Mammary epithelial cell (primary cell): ENCODE measurements at regions of chr1 and their contacts with region 1.

Region 1: DNA sequence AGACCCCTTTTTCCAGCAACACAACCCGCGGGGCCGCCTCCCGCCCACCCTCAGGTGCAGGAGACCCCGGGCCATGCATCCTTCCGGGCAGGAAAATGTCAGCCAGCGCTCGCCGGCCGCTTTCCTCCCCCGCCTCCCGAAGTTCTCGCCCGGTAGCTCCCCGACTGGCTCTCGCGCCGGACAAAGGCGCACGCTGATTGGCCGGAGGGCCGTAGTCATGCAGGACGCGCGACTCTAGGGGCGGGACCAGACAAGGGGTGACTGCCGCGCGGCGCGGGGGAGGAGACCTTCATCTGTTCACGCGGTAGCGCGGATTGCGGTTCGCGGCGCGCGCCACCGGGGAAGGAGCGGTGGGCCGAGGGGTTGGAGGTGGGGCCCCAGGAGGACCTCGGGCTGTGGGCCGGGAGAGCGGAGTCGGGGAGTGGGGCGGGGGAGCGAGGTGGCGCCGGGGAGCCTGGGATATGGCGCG is at the start of gene FLVCR1:
- DNase-seq: peak; percentile 94
- H3K4me3 ChIP-seq: peak within 1 kb of the TSS; percentile 73 to 95 (median 77)
- H3K27ac ChIP-seq: peak within 1 kb of the TSS; percentile 61
- H3K4me1 ChIP-seq: peaks cover 23% of the 10 kb centered on the region
- H3K27me3 ChIP-seq: no peaks in the 10 kb centered on the region
- CTCF ChIP-seq: no peak
- total RNA-seq, gene FLVCR1: 8.8 to 9.2 TPM

Region 2: DNA sequence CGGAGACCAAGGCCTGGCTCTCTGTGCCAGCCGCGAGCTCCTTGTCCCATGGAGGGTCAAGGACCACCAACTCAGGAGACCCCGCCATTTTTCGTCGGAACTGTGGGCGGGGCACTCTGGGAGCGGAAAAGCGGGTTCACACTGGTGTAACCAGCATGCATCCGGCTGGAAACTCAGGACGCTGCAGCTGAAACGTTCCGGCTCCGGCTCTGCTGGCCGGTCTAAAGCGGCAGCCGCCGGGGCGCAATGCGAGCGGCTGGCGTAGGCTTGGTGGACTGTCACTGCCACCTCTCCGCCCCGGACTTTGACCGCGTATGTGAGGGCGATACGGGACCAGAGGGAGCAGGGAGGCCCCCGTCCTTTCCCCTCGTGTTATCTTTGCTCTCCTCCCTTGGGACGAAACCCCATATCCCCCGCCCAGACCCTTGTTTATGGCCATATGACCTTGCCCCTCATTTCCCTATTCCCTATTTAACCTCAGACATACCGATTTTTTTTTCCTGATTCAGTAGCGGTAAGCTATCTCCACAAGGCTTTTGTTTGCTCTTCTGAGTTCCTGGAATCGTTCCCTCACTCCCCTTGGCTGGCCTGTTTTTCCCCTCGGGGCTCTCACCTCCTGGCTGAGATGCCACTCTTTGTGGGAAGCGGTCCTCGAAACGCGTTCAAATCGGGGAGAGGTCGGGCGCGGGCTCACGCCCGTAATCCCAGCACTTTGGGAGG is 66.2 kb before region 1 on chr1 and contains the starts of genes NSL1 and TATDN3:
- CTCF ChIA-PET with region 1: interaction called, 8 read pairs
- dilution Hi-C with region 1: no loop called
- in situ Hi-C with region 1: no loop called
- intact Hi-C with region 1: loop called (anchors 2 kb)
- DNase-seq: peak; percentile 90
- H3K4me3 ChIP-seq: peak within 1 kb of the TSS; percentile 92 to 97 (median 95)
- H3K27ac ChIP-seq: peak within 1 kb of the TSS; percentile 70
- H3K4me1 ChIP-seq: peaks cover 4% of the 10 kb centered on the region
- H3K27me3 ChIP-seq: no peaks in the 10 kb centered on the region
- CTCF ChIP-seq: no peak
- total RNA-seq, gene NSL1: 14.0 to 21.1 TPM
- total RNA-seq, gene TATDN3: 15.3 to 18.4 TPM

Region 3: GRCh38 chr1:212873518-212873917 is 15.5 kb after region 1 on chr1:
- CTCF ChIA-PET with region 1: no interaction called
- dilution Hi-C with region 1: no loop called
- in situ Hi-C with region 1: no loop called
- intact Hi-C with region 1: loop called (anchors 1 kb)
- DNase-seq: no peak
- H3K4me3 ChIP-seq: no peak overlapping the region
- H3K27ac ChIP-seq: no peak overlapping the region
- H3K4me1 ChIP-seq: peaks cover 10% of the 10 kb centered on the region
- H3K27me3 ChIP-seq: no peaks in the 10 kb centered on the region
- CTCF ChIP-seq: no peak

Region 4: DNA sequence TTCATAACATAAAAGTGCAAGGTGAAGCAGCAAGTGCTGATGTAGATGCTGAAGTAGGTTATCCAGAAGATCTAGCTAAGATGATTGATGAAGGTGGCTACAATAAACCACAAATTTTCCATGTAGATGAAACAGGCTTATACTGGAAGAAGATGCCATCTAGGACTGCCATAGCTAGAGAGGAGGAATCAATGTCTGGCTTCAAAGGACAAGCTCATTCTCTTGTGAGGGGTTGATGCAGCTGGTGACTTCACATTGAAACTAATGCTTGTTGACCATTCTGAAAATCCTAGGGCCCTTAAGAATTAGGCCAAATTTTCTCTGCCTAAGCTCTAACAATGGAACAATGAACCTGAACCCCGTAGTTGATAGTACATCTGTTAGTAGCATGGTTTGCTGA is 34.1 kb after region 1 on chr1:
- CTCF ChIA-PET with region 1: no interaction called
- dilution Hi-C with region 1: no loop called
- in situ Hi-C with region 1: no loop called
- intact Hi-C with region 1: no loop called
- DNase-seq: no peak
- H3K4me3 ChIP-seq: no peak overlapping the region
- H3K27ac ChIP-seq: no peak overlapping the region
- H3K4me1 ChIP-seq: no peaks in the 10 kb centered on the region
- H3K27me3 ChIP-seq: no peaks in the 10 kb centered on the region
- CTCF ChIP-seq: no peak